ENCODE measurements at regions of chr17 and their contacts with region 1.

Region 1: GRCh38 chr17:77088455-77089123 is 52.2 kb upstream of the SEC14L1 start:
- DNase-seq: peak; percentile 84
- H3K4me3 Mint-ChIP-seq: peak overlapping the region; percentile 91
- H3K27ac Mint-ChIP-seq: peak overlapping the region; percentile 94
- H3K4me1 Mint-ChIP-seq: peaks cover 39% of the 10 kb centered on the region
- H3K27me3 Mint-ChIP-seq: peaks cover 3% of the 10 kb centered on the region

Region 2: GRCh38 chr17:77127735-77128361 is 39.3 kb after region 1 on chr17:
- intact Hi-C with region 1: loop called (anchors 2 kb)
- DNase-seq: peak; percentile 75
- H3K4me3 Mint-ChIP-seq: peak overlapping the region; percentile 76
- H3K27ac Mint-ChIP-seq: peak overlapping the region; percentile 97
- H3K4me1 Mint-ChIP-seq: peaks cover 48% of the 10 kb centered on the region
- H3K27me3 Mint-ChIP-seq: no peaks in the 10 kb centered on the region

Region 3: DNA sequence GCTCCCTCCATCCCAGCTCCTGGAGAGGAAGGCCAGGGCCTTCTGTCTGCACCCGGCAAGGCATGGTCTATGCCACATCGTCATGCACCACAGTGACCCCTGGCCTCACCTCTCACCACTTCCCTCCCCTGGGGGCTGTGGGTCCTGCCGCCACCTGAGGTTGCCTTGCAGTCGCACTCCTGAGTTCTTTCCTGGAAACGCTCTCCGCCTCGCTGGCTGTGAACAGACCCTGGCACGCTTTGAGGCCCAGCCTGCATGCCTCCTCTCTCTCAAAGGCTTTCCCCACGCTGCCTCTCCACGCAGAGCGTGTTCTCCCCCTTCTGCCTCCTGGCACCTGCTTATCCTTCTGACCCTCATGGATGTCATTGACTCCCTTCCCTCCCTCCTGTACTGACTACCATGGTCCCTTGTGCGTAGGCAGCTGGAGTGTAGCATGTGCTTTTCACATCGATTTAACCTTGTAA is 97.6 kb after region 1 on chr17:
- intact Hi-C with region 1: loop called (anchors 2 kb)
- DNase-seq: peak; percentile 33
- H3K4me3 Mint-ChIP-seq: no peak overlapping the region
- H3K27ac Mint-ChIP-seq: no peak overlapping the region
- H3K4me1 Mint-ChIP-seq: peaks cover 31% of the 10 kb centered on the region
- H3K27me3 Mint-ChIP-seq: no peaks in the 10 kb centered on the region

Region 4: DNA sequence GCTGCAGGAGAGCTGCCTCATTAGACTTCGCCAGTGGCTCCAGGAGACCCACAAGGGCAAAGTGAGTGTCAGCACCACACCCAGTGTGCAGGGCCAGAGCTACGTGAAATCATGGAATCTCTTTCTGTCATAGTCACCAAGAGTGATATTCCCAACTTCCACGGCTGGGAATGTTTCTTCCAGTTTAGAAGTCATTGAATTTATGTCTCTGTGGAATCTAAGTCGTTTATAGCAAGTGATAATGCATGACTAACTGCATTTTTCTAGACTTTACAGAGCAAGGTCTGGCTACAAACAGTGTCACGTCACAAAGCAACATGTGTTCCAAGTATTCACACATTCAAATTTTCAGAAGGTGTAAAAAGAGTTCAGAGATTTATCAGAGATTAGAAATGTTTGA is 107.7 kb after region 1 on chr17:
- intact Hi-C with region 1: no loop called
- DNase-seq: no peak
- H3K4me3 Mint-ChIP-seq: no peak overlapping the region
- H3K27ac Mint-ChIP-seq: no peak overlapping the region
- H3K4me1 Mint-ChIP-seq: peaks cover 10% of the 10 kb centered on the region
- H3K27me3 Mint-ChIP-seq: no peaks in the 10 kb centered on the region

Region 5: GRCh38 chr17:77247048-77247541 is 158.5 kb after region 1 on chr17:
- intact Hi-C with region 1: loop called (anchors 1 kb)
- DNase-seq: peak; percentile 81
- H3K4me3 Mint-ChIP-seq: peak overlapping the region; percentile 58
- H3K27ac Mint-ChIP-seq: no peak overlapping the region
- H3K4me1 Mint-ChIP-seq: peaks cover 24% of the 10 kb centered on the region
- H3K27me3 Mint-ChIP-seq: peaks cover 28% of the 10 kb centered on the region